ENCODE measurements at regions of chr2 and their contacts with region 1.

Region 1: GRCh38 chr2:212465456-212465855 is 73.1 kb downstream of the ERBB4 start:
- DNase-seq: no peak
- H3K4me3 ChIP-seq: no peak overlapping the region
- H3K27ac ChIP-seq: no peak overlapping the region
- H3K27me3 ChIP-seq: no peaks in the 10 kb centered on the region
- CTCF ChIP-seq: no peak

Region 2: GRCh38 chr2:212402315-212402714 is 63.1 kb before region 1 on chr2:
- CTCF ChIA-PET with region 1: no interaction called
- POLR2A ChIA-PET with region 1: no interaction called
- DNase-seq: no peak
- H3K4me3 ChIP-seq: no peak overlapping the region
- H3K27ac ChIP-seq: no peak overlapping the region
- H3K27me3 ChIP-seq: no peaks in the 10 kb centered on the region
- CTCF ChIP-seq: no peak

Region 3: GRCh38 chr2:212596276-212596675 is 130.8 kb after region 1 on chr2:
- CTCF ChIA-PET with region 1: interaction called, 11 read pairs
- POLR2A ChIA-PET with region 1: no interaction called
- DNase-seq: no peak
- H3K4me3 ChIP-seq: no peak overlapping the region
- H3K27ac ChIP-seq: no peak overlapping the region
- H3K27me3 ChIP-seq: no peaks in the 10 kb centered on the region
- CTCF ChIP-seq: no peak